Lower leg skin (tissue), 4 donors: ENCODE measurements at regions of chr14 and their contacts with region 1.

Region 1: GRCh38 chr14:60628892-60629291 is 20.4 kb downstream of the SIX1 start:
- DNase-seq: no peak
- H3K4me3 ChIP-seq: no peak overlapping the region
- CTCF ChIP-seq: no peak
- POLR2A ChIP-seq: no peak

Region 2: DNA sequence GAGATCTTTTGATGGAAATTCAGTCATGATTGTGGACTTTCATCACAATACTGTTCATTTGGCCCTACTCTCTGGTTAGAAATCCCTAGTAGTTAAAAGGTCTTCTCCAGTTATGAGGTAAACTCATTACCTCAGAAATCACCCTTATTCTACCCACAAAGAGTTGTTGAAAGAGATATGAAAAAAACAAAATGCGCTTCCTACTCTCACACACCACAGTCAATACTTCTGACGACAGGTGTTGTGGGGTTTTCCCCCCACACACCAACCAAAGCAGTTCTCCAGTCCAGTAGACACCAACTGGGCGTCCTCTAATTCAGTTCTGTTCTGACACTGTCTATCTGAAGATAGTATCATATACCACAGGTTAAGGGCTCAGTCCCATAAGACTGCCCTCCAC is 297.1 kb after region 1 on chr14:
- intact Hi-C with region 1: no loop called
- DNase-seq: no peak
- H3K4me3 ChIP-seq: no peak overlapping the region
- CTCF ChIP-seq: no peak
- POLR2A ChIP-seq: no peak

Region 3: DNA sequence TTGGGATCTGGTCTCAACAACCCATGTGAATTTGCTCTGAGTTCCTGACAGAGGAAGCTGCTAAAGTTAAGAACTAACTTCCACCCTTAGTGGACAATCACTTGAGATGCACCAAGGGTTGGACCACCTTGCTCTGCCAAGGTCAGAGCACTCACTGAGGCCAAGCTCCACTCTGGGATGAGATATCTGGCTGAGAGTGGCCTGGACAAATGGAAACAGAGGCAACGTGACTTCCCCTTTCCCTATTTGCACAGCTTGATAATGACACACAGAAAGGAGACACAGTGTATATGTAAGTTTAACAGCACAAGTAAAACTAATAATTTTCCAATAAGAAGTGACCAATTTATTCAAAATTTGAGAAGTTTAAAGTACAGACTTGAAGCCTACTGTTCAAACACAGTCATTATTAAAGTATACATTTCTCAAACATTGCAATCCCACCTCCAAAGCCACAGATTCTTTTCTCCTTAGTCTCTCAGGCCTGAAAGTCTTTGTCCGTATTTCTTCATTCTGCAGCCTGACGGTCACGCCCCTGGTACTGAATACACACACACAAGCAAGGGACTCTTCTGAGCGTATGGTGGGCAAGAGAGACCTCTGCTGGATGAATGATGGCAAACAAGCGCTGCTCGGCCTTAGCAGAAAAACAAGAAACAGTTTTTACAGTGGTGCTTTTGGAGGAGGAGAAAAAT is 623.6 kb after region 1 on chr14:
- intact Hi-C with region 1: loop called (anchors 5 kb)
- DNase-seq: peak; percentile 82 to 90
- H3K4me3 ChIP-seq: no peak overlapping the region
- CTCF ChIP-seq: peak in 1 of 3 donors; percentile 39
- POLR2A ChIP-seq: no peak

Region 4: DNA sequence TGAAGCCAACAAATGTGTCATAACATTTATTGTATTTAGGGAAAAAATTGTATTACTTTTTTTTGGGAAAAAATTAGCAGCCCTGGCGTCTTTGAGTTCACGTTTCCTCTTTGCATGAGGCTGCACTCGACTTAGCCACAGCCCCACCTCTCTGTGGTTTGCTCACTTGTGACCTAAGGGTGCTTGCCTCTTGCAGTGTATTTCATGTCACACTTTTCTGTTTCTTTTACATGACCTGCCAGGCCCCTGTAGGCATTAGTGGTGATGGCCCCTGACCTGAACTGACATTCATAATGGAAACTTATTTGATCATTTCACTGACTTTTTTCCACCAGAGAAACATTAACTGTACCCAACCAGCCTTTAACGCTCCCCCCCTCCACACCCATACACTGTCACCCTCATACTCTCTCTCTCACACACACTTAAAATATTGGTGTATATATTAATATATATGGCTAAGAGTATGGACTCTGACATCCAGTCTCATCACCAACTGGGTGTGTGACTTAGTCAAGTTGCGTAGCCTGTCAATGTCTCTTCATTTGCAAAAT is 815.4 kb after region 1 on chr14:
- intact Hi-C with region 1: no loop called
- DNase-seq: no peak
- H3K4me3 ChIP-seq: no peak overlapping the region
- CTCF ChIP-seq: no peak
- POLR2A ChIP-seq: no peak